ENCODE measurements at regions of chr14 and their contacts with region 1.

Region 1: GRCh38 chr14:97724265-97724731 is 927.1 kb downstream of the VRK1 start:
- DNase-seq: peak; percentile 60
- ATAC-seq: peak; percentile 93
- H3K4me3 Mint-ChIP-seq: peak overlapping the region; percentile 75
- H3K27ac Mint-ChIP-seq: peak overlapping the region; percentile 88
- H3K4me1 Mint-ChIP-seq: peaks cover 61% of the 10 kb centered on the region
- H3K27me3 Mint-ChIP-seq: no peaks in the 10 kb centered on the region

Region 2: DNA sequence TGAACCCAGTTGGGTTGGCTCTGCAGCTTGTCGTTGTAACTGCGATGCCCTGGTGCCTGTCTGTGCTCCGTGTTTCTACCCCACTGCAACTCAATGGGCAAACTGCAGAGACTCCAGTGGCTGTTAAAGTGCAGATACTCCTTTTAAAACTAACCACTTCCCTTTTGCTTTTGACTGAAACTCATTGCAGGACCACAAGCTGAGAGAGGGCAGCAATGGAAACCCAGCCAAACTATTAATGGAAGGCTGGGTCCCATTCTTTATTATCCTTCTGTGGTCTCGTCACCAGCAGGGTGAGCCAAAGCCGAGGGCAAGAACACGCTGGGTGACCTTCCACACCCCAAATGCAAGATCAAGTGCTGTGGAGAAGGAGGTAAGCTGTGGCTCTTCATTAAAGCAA is 16.7 kb before region 1 on chr14:
- CTCF ChIA-PET with region 1: interaction called, 21 read pairs
- POLR2A ChIA-PET with region 1: interaction called, 6 read pairs
- DNase-seq: peak; percentile 66
- ATAC-seq: peak; percentile 69
- H3K4me3 Mint-ChIP-seq: peak overlapping the region; percentile 23
- H3K27ac Mint-ChIP-seq: peak overlapping the region; percentile 93
- H3K4me1 Mint-ChIP-seq: peaks cover 83% of the 10 kb centered on the region
- H3K27me3 Mint-ChIP-seq: no peaks in the 10 kb centered on the region

Region 3: DNA sequence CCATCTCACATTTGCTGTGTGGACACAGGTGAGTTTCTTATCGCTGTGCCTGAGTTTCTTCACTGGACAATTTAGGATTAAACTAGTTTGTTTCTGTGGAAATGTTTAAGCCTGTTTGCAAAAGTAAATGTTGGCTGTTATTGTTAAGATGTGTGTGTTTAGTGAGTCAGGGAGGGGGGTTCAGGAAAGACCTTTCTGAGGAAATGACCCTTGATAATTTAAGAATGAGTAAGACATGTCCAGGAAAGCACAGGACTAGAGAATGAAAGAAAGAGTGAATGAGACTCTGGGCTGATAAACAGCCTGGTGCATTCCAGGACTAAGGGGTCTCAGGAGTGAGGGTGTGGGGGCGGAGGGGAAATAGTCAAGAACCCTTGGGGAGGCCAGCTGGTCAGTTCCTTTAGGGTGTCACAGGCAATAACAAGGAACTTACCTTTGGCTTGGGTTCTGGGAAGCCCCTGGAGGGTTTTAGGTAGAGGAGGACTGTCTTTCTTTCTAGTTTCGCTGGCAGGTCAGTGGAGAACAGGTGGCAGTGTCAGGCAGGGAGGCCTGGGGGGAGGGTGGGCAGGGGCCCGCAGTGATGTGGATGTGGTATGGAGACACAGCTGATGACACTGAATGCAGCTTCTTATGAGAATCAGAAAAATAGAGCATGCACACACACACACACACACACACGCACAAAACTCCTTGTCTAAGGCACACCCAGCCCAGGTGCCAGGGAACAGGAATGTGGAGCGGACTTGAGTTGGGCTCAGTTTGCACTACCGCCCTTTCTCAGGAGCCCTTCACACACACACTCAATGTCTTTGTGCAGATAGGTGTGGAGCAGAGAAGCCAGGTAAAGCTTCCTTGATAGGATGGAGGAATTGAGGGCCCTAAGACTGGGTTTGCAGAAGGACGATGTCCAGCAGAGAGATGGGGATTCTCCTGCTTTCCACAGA is 78.4 kb after region 1 on chr14:
- CTCF ChIA-PET with region 1: no interaction called
- POLR2A ChIA-PET with region 1: no interaction called
- DNase-seq: no peak
- ATAC-seq: no peak
- H3K4me3 Mint-ChIP-seq: no peak overlapping the region
- H3K27ac Mint-ChIP-seq: no peak overlapping the region
- H3K4me1 Mint-ChIP-seq: peaks cover 2% of the 10 kb centered on the region
- H3K27me3 Mint-ChIP-seq: peaks cover 4% of the 10 kb centered on the region

Measured in activated CD8-positive, alpha-beta T cell treated with anti-CD3 and anti-CD28 coated beads, Interleukin-2, amount 10 ng/mL, durations not matched to agents 7 days and 5 days (primary cell).